ENCODE measurements at regions of chr9 and their contacts with region 1.

Region 1: GRCh38 chr9:2043881-2044462 is 28.8 kb downstream of the SMARCA2 start:
- DNase-seq: peak in 1 of 9 donors; percentile 16
- ATAC-seq: peak; percentile 31
- H3K4me3 ChIP-seq: no peak overlapping the region
- H3K4me3 Mint-ChIP-seq: peak overlapping the region in 4 of 10 donors; percentile 26 to 46 (median 41)
- H3K27ac ChIP-seq: no peak overlapping the region
- H3K27ac Mint-ChIP-seq: peak overlapping the region; percentile 39 to 83 (median 80)
- H3K4me1 ChIP-seq: peaks cover 0 to 9% of the 10 kb centered on the region in 2 donors
- H3K4me1 Mint-ChIP-seq: peaks cover 19 to 73% (median 62%) of the 10 kb centered on the region in 7 donors
- H3K27me3 ChIP-seq: no peaks in the 10 kb centered on the region
- H3K27me3 Mint-ChIP-seq: no peaks in the 10 kb centered on the region

Region 2: DNA sequence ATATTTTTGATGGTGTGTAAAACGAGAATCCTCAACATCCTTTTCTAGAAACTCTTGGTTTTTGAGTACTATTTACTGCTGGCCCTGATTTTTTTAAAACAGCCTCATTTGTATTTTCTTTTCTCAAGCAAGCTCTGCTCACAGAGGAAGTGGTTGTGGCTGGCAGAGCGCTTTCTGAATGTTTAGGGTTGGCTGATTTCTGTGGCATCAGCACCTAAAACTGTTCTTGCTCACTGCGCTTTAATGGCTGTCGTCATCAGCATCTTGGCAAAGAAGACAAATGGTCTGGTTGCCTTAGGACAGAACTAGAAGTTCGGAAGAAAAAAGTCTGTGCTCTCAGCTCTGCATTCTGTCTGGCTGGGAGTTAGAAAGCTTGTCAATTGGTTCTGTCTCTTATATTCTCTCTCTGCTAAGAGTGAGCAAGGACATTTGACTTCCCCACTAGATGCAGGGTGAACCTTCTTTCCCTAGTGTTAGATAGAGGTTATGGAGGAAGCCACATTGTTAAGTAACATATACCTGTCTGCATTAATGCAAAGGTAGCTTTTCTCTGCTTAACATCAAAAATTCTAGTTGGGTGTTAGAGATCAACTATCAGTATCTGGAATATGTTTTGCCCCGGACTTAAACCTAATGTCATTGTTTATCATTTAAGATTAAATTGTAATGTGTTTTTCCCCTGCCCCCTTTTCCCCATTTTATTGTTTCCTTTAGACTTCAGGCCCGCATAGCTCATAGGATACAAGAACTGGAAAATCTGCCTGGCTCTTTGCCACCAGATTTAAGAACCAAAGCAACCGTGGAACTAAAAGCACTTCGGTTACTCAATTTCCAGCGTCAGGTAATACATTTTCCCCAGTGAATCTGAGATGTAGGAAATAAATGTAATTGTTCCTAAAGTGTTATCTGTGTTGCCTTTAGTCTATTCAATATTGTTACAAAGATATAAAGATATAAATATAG is 10.2 kb after region 1 on chr9:
- CTCF ChIA-PET with region 1: no interaction called
- POLR2A ChIA-PET with region 1: interaction called, 4 read pairs
- intact Hi-C with region 1: loop called in 1 of 2 experiments (anchors 1 kb)
- DNase-seq: peak; percentile 23 to 90 (median 83)
- ATAC-seq: peak; percentile 97
- H3K4me3 ChIP-seq: no peak overlapping the region
- H3K4me3 Mint-ChIP-seq: peak overlapping the region; percentile 2 to 79 (median 69)
- H3K27ac ChIP-seq: peak overlapping the region; percentile 60
- H3K27ac Mint-ChIP-seq: peak overlapping the region; percentile 87 to 97 (median 93)
- H3K4me1 ChIP-seq: peaks cover 26 to 29% of the 10 kb centered on the region in 2 donors
- H3K4me1 Mint-ChIP-seq: peaks cover 24 to 71% (median 64%) of the 10 kb centered on the region in 7 donors
- H3K27me3 ChIP-seq: no peaks in the 10 kb centered on the region
- H3K27me3 Mint-ChIP-seq: no peaks in the 10 kb centered on the region